HEK293T (cell line): ENCODE measurements at regions of chr2 and their contacts with region 1.

Region 1: GRCh38 chr2:113138428-113139322 is 11.3 kb downstream of the IL1RN start:
- DNase-seq: peak; percentile 68

Region 2: DNA sequence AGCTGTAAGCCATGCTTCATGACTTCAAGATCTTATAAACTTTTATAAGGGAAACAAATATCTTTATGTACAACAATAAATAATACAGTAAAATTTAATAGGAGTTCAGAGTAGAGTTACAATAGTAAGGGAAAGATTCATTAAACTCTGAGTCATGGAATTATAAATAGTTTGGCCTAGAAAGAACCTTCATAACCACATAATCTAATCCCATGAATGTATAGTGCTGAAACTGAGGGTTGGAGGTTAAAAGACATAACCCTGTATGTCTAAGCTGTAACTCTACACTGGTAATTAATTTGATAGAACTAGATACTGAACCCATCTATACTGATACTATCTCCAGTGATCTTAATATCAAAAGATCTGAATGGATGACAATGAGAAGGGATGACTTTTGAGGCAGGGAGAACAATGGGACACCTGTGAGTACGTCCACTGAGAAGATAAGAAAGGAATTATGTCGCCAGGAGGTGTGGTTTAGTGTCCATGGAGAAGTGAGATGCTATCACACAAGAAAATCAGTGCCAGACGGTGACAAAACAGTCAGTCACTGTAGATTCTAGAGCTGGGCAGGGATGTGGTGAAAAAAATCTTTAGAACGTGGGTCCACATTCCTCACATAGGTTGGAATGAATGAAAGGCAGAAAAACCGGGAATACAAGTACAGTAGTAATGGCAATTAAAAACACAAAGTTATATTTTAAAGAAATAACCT is 69.8 kb before region 1 on chr2:
- CTCF ChIA-PET with region 1: no interaction called
- POLR2A ChIA-PET with region 1: no interaction called
- DNase-seq: no peak

Region 3: DNA sequence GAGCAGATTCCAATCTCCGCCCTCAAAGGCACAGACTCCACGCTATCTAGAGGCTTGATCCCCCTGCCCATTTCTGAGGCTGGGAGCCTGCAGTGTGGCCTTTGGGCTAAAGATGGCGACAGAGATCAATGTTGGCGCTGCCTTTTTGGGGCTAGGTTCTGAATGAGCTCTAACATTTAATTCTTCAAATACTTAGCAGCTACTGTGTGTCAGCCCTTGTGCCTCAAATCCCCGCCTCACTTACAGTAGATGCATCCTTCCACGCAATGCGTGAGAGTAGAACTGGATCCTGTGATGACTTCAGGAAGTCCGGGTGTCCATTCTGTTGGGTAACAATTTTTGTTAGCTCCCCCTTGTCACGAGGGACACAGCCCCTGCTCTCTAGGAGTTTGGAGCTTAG is 58.5 kb before region 1 on chr2:
- CTCF ChIA-PET with region 1: interaction called, 11 read pairs
- POLR2A ChIA-PET with region 1: no interaction called
- DNase-seq: peak; percentile 65

Region 4: GRCh38 chr2:113127646-113128570 is 10.8 kb before region 1 on chr2:
- CTCF ChIA-PET with region 1: interaction called, 12 read pairs
- POLR2A ChIA-PET with region 1: no interaction called
- DNase-seq: no peak

Region 5: DNA sequence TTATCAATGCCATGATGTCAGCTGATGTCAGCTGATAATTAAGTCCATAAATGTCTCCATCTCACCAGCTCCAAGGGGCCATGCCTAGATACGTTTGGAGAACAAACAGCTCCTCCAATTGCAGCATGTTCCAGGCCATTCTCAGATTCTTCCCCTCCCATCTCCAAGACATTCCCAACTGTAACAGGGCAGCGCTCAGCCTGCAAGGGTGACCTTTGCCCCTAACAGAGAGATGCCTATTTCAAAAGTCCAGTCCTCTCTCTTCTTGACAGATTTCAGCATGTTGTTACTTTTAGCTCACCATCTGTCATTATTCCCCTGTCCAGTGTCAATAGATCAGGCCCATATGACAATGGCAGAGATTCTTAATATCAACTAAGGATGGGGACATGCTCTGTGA is 45.0 kb after region 1 on chr2:
- CTCF ChIA-PET with region 1: interaction called, 12 read pairs
- POLR2A ChIA-PET with region 1: no interaction called
- DNase-seq: no peak